GM12878 (cell line): ENCODE measurements at regions of chr6 and their contacts with region 1.

Region 1: DNA sequence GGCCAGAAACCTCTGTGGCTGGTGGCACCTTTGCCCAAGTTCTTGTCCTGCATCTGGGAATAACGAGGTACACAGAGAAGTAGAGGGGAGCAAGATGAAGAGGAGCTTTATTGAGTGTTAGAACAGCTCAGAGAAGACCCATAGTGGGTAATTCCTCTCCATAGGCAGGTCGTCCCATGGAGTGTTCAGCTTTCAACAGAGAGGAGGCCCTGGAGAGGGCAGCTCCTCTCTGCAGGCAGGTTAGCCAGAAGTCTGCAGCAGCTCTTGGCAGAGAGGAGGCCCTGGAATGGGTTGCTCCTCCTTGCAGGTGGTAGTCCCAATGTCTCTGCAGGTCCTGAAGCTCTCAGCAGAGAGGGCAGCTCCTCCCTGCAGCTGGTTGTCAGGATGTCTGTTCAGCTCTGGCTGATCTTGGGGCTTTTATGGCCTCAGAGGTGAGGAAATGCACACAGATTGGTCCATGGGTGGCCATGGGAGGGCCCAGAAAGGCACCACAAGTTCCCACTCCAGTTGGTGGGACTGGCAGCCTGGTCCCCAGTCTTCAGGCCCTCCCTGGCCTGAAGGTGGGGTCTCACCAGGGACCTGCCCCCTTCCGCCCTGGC is 89.0 kb downstream of the IPCEF1 start:
- DNase-seq: no peak
- ATAC-seq: peak; percentile 47
- H3K4me3 ChIP-seq: no peak overlapping the region
- H3K27ac ChIP-seq: no peak overlapping the region
- H3K4me1 ChIP-seq: no peaks in the 10 kb centered on the region
- H3K27me3 ChIP-seq: no peaks in the 10 kb centered on the region
- CTCF ChIP-seq: no peak
- EP300 ChIP-seq: no peak
- POLR2A ChIP-seq: no peak
- RAD21 ChIP-seq: no peak

Region 2: GRCh38 chr6:154252678-154253077 is 14.9 kb before region 1 on chr6:
- CTCF ChIA-PET with region 1: interaction called, 90 read pairs
- POLR2A ChIA-PET with region 1: interaction called, 4 read pairs
- RAD21 ChIA-PET with region 1: interaction called, 15 read pairs
- SMC1A ChIA-PET with region 1: interaction called, 86 read pairs
- in situ Hi-C with region 1: no loop called
- intact Hi-C with region 1: no loop called
- DNase-seq: no peak
- ATAC-seq: no peak
- H3K4me3 ChIP-seq: no peak overlapping the region
- H3K27ac ChIP-seq: no peak overlapping the region
- H3K4me1 ChIP-seq: peaks cover 36% of the 10 kb centered on the region
- H3K27me3 ChIP-seq: no peaks in the 10 kb centered on the region
- CTCF ChIP-seq: no peak
- EP300 ChIP-seq: no peak
- POLR2A ChIP-seq: no peak
- RAD21 ChIP-seq: no peak